Mammary epithelial cell (primary cell): ENCODE measurements at regions of chr1 and their contacts with region 1.

Region 1: DNA sequence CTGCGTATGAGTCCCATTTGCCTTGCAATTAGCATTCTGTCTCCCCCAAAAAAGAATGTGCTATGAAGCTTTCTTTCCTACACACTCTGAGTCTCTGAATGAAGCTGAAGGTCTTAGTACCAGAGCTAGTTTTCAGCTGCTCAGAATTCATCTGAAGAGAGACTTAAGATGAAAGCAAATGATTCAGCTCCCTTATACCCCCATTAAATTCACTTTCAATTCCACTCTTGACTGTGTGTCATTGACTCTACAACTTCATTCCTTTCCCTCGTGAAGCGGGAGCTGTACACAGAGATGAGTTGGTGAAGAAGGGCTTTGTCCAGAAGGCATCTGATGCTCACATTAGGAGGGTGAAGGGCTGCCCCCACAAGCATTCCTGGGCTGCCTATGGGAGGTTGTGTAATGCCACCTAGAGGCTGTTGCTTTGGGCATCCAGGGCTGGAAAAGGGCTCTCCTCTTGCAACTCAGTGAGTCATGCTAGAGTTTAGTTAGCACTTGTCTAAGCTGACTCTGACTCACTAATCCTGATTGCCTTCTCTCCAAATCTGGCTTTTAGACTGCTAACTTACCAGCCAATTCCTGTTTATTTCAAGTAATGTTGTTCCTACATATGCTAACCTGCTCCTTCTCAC is 1.8 kb downstream of the SPRR1B start:
- DNase-seq: peak; percentile 97
- H3K4me3 ChIP-seq: peak overlapping the region in 1 of 3 experiments; percentile 47
- H3K27ac ChIP-seq: peak overlapping the region; percentile 65
- H3K4me1 ChIP-seq: peaks cover 39% of the 10 kb centered on the region
- H3K27me3 ChIP-seq: no peaks in the 10 kb centered on the region
- CTCF ChIP-seq: peak; percentile 63 to 73

Region 2: DNA sequence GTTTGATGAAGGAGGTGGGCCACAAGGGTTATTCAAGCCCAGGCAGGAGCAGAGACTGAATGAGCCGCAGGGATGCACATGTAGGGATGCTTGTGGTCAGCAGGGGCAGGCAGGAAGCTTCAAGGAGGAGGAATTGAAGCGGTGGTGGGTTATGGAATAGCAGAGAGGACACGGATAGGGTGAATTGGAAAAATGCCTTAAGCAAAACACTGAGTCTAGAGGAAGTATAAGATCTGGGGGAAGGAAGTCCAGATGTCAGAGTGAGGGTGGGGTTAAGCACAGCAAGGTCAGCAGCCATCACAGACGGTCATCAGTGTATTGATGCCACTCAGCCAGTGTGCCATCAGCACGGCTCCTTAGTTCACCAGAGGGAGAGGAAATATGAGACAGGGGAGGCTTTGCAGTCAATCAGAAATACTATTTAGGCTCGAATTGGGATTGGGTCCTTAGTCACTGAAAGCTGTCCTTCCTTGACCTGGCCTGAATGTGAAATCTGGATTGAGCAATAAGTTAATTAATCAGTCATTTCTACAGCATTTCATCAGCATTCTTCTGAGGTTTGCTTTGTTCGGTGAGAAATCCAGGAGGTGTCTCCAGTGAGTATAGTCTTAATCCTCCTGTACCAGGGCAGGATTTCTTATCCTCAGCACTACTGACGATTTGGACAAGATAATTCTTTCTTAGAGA is 263.8 kb before region 1 on chr1:
- CTCF ChIA-PET with region 1: no interaction called
- dilution Hi-C with region 1: no loop called
- in situ Hi-C with region 1: no loop called
- intact Hi-C with region 1: loop called (anchors 10 kb)
- DNase-seq: peak; percentile 59
- H3K4me3 ChIP-seq: no peak overlapping the region
- H3K27ac ChIP-seq: peak overlapping the region; percentile 57
- H3K4me1 ChIP-seq: peaks cover 28% of the 10 kb centered on the region
- H3K27me3 ChIP-seq: no peaks in the 10 kb centered on the region
- CTCF ChIP-seq: peak; percentile 14 to 30

Region 3: GRCh38 chr1:152926091-152926490 is 106.7 kb before region 1 on chr1:
- CTCF ChIA-PET with region 1: interaction called, 10 read pairs
- dilution Hi-C with region 1: no loop called
- in situ Hi-C with region 1: no loop called
- intact Hi-C with region 1: loop called (anchors 1 kb)
- DNase-seq: peak; percentile 64
- H3K4me3 ChIP-seq: no peak overlapping the region
- H3K27ac ChIP-seq: no peak overlapping the region
- H3K4me1 ChIP-seq: peaks cover 12% of the 10 kb centered on the region
- H3K27me3 ChIP-seq: no peaks in the 10 kb centered on the region
- CTCF ChIP-seq: peak; percentile 84 to 89

Region 4: GRCh38 chr1:152954434-152954833 is 78.4 kb before region 1 on chr1:
- CTCF ChIA-PET with region 1: no interaction called
- dilution Hi-C with region 1: no loop called
- in situ Hi-C with region 1: no loop called
- intact Hi-C with region 1: loop called (anchors 1 kb)
- DNase-seq: peak; percentile 97
- H3K4me3 ChIP-seq: peak overlapping the region in 2 of 3 experiments; percentile 28 to 33
- H3K27ac ChIP-seq: peak overlapping the region; percentile 94
- H3K4me1 ChIP-seq: peaks cover 35% of the 10 kb centered on the region
- H3K27me3 ChIP-seq: no peaks in the 10 kb centered on the region
- CTCF ChIP-seq: no peak

Region 5: GRCh38 chr1:153100236-153100635 is 67.4 kb after region 1 on chr1:
- CTCF ChIA-PET with region 1: no interaction called
- dilution Hi-C with region 1: no loop called
- in situ Hi-C with region 1: no loop called
- intact Hi-C with region 1: loop called (anchors 2 kb)
- DNase-seq: peak; percentile 98
- H3K4me3 ChIP-seq: no peak overlapping the region
- H3K27ac ChIP-seq: peak overlapping the region; percentile 93
- H3K4me1 ChIP-seq: peaks cover 11% of the 10 kb centered on the region
- H3K27me3 ChIP-seq: no peaks in the 10 kb centered on the region
- CTCF ChIP-seq: no peak

Region 6: DNA sequence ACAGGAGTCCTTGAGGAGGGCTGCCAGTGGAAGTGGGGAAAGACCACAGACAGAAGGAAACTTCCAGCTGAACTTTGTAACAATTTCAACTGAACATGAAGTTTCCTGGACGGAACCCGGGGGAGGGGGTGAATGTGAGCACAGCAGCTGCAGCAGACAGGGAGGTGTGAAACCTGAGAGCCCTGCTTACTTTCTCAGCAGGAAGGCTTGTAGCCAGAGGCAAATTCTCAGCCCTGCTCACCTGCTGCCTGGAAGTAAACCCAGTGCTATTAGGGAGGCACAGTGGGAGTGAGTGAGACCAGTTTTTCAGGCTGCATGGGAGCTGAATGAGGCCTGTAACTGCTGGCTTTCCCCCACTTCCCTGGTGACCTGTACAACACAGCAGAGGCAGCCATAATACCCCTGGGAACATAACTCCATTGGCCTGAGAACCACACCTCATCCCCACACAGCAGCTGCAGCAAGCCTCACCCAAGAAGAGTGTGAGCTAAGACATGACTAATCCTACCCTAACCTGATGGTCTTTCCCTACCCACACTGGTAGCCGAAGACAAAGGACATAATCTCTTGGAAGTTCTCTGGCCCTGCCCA is 90.1 kb after region 1 on chr1:
- CTCF ChIA-PET with region 1: no interaction called
- dilution Hi-C with region 1: loop called (anchors 5 kb)
- in situ Hi-C with region 1: no loop called
- intact Hi-C with region 1: no loop called
- DNase-seq: peak; percentile 97
- H3K4me3 ChIP-seq: no peak overlapping the region
- H3K27ac ChIP-seq: peak overlapping the region; percentile 87
- H3K4me1 ChIP-seq: peaks cover 28% of the 10 kb centered on the region
- H3K27me3 ChIP-seq: no peaks in the 10 kb centered on the region
- CTCF ChIP-seq: no peak

Region 7: GRCh38 chr1:153796791-153797659 is 764.2 kb after region 1 on chr1:
- CTCF ChIA-PET with region 1: no interaction called
- dilution Hi-C with region 1: no loop called
- in situ Hi-C with region 1: no loop called
- intact Hi-C with region 1: no loop called
- DNase-seq: peak; percentile 59
- H3K4me3 ChIP-seq: no peak overlapping the region
- H3K27ac ChIP-seq: no peak overlapping the region
- H3K4me1 ChIP-seq: no peaks in the 10 kb centered on the region
- H3K27me3 ChIP-seq: no peaks in the 10 kb centered on the region
- CTCF ChIP-seq: peak; percentile 88 to 90